Mammary epithelial cell (primary cell): ENCODE measurements at regions of chr22 and their contacts with region 1.

Region 1: DNA sequence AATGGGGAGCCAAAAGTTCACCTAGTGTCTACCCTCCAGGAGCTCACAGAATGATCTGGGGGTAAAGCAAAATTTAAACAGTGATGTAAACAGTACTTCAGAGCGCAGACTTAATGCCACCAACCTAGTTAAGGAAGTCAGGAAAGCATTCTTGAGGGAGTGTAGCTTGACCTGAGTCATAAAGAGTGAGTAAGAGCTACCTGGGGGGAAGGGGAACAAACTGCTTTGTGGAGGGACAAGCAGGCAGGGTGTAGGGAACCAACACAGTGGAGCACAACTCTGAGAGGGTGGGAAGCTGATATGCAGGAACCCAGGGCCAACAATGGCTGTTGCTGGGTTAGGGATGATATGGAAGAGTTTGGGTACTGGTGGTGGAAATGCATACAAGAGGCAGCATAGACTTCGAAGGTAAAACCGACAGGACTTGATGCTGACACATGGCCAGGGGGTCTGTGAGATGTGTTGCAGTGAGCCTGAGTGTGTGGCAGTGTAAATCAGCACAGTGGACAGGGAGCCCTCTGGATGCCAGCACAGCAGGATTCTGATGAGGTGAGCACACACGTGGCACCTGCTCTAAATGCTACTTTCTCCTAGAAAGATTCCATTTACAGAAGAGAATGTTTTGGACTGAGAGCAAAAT is 58.3 kb upstream of the CYP2D6 start:
- DNase-seq: peak; percentile 58
- H3K4me3 ChIP-seq: no peak overlapping the region
- H3K27ac ChIP-seq: no peak overlapping the region
- H3K4me1 ChIP-seq: peaks cover 11% of the 10 kb centered on the region
- H3K27me3 ChIP-seq: no peaks in the 10 kb centered on the region
- CTCF ChIP-seq: no peak

Region 2: DNA sequence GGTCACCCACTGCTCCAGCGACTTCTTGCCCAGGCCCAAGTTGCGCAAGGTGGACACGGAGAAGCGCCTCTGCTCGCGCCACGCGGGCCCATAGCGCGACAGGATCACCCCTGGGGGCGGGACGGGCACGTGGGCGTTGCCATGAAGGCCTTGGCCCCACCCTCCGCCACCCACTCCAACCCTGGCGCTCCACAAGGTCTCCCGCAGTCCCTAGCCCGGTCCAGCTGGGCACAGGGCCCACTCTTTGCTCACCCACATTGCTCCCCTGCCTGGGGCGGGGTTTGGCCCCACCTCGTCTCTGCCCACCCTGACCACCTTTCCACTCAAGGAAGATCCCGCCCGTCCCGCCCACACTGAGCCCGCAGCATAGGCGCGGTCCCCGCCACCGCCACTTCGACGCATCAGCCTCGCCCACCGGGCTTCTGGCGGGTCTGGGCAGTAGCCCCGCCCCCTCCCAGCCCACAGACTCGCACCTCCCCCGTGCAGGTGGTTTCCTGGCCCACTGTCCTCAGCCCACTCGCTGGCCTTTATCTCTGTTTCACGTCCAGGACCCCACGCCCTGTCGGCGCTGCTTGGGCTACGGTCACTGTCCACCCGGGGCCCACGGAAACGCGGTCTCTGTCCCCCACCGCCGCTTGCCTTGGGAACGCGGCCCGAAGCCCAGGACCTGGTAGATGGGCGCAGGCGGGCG is 46.0 kb before region 1 on chr22:
- CTCF ChIA-PET with region 1: no interaction called
- dilution Hi-C with region 1: no loop called
- in situ Hi-C with region 1: no loop called
- intact Hi-C with region 1: no loop called
- DNase-seq: no peak
- H3K4me3 ChIP-seq: no peak overlapping the region
- H3K27ac ChIP-seq: no peak overlapping the region
- H3K4me1 ChIP-seq: no peaks in the 10 kb centered on the region
- H3K27me3 ChIP-seq: no peaks in the 10 kb centered on the region
- CTCF ChIP-seq: no peak

Region 3: DNA sequence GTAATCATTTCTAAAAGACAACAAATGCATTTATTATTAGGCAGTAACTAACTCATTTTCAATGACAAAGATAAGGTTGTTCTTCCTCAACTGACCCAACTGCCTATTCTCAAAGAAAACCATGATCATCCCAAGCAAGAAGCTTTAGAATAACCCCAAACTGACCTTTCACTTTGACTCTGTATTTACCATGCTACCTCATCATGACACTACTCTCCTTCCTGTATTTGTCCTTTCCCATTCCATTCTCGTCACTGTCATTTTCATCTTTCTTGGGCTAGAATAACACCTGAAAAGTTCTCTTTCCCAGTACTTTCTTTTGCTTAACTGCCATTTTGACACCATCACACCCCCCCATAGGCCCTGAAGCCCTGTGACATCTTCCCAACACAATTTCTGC is 33.2 kb after region 1 on chr22:
- CTCF ChIA-PET with region 1: no interaction called
- dilution Hi-C with region 1: loop called (anchors 5 kb)
- in situ Hi-C with region 1: no loop called
- intact Hi-C with region 1: no loop called
- DNase-seq: no peak
- H3K4me3 ChIP-seq: no peak overlapping the region
- H3K27ac ChIP-seq: no peak overlapping the region
- H3K4me1 ChIP-seq: no peaks in the 10 kb centered on the region
- H3K27me3 ChIP-seq: no peaks in the 10 kb centered on the region
- CTCF ChIP-seq: no peak

Region 4: DNA sequence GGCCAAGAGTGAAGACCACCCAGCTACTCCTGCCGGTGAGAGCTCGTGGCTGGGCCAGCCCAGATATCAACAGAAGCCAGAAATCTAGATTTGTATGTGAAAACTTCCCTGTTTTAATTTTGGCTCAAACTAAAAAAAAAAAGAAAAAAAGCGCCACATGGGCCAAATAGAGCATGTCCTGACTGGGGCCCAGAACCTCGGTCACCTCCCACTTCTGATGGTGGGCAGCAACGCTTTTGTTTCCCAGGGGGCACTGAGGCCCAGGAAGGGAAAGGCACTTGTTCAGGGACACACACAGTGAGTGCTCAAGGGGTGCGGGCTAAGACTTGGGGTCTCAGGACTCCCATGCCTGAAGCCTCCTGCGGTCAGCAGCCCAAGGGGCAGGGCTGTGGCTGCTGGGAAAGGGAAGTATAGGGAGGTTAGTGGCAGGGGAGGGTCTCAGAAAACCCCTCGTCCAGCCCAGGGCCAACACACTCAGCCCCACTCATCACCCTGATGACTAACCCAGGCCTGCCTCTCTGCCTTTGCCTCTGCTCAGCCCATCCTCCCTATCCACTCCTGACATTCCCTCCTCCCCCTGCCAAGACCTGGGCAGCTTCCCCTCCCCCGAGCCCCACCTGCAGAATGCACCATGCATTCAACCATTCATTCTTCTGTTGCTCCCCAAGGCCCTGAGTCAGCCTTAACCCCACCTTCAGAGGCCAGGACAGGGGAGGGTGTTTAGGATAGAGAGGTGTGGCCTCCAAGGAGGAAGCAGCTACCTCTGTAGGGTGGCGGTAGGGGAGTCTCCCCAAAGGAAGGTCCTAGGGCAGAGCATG is 111.5 kb after region 1 on chr22:
- CTCF ChIA-PET with region 1: no interaction called
- dilution Hi-C with region 1: no loop called
- in situ Hi-C with region 1: no loop called
- intact Hi-C with region 1: no loop called
- DNase-seq: peak; percentile 83
- H3K4me3 ChIP-seq: no peak overlapping the region
- H3K27ac ChIP-seq: no peak overlapping the region
- H3K4me1 ChIP-seq: peaks cover 17% of the 10 kb centered on the region
- H3K27me3 ChIP-seq: no peaks in the 10 kb centered on the region
- CTCF ChIP-seq: no peak

Region 5: DNA sequence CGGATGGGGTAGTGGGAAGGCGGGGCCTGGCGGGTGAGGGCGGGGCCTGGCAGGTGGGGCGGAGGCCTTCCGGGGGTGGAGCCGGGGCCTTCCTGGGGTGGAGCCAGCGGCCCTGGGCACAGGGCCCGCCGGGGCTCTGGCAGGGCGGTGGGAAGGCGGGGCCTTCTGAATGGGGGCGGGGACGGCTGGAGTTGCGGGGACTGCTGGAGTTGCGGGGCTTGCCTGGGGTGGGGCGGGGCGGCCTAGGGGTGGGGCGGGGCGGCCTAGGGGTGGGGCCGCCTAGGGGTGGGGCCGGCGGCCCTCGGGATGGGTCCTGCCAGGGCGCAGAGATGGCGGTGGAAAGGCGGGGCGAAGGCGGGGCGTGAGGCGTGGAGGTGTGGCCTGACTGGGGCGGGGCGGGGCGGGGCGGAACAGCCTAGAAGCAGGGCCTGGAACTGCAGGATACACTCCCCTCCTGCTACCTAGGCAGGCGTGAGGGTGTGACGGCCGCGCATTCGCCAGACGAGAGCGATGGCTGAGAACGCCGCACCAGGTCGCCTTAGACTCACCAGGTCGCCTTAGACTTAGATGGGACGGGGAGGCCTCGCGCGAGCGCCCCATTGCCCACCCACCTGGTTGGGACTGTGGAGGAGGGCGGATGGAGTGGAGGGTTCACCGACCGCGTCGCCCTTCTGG is 311.4 kb after region 1 on chr22:
- CTCF ChIA-PET with region 1: no interaction called
- dilution Hi-C with region 1: no loop called
- in situ Hi-C with region 1: no loop called
- intact Hi-C with region 1: no loop called
- DNase-seq: peak; percentile 71
- H3K4me3 ChIP-seq: peak overlapping the region in 2 of 3 experiments; percentile 21 to 38
- H3K27ac ChIP-seq: no peak overlapping the region
- H3K4me1 ChIP-seq: peaks cover 9% of the 10 kb centered on the region
- H3K27me3 ChIP-seq: no peaks in the 10 kb centered on the region
- CTCF ChIP-seq: no peak